ENCODE measurements at regions of chr9 and their contacts with region 1.

Region 1: DNA sequence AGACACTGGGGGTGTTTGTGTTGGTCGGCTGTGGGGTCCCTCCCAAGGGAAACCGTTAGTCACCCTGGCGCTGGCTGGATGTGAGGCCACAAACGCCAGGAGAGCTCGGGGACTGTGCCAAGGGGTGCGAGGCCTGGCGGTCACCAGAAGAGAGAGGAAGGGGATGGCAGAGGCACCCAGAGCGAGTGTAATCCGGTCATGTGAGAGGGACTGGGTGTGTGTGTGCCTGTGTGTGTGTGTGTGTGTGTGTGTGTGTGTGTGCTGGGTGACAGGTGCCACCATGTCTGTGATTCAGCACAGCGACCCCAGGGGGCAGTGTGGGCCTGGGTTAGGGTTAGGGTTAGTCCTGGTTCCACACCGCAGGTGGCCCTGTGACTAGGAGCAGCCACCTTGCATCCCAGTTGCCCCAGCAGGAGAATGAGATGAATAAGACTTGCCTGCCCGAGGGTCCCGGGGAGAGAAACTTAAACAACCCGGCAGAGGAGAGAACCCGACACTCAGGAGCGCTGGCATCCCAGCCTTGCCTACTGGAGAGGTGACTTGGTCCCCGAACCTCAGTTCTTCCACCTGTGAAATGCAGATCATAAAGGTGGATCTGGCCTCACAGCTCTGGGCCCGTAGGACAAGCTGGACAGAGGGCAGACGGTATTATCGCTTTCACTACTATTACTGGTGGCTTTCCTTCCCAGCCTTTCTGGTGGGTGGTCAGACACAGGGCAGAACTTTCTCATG is 1.4 kb upstream of the ADAMTSL2 start:
- DNase-seq: peak; percentile 92

Region 2: GRCh38 chr9:133576875-133577736 is 44.0 kb after region 1 on chr9:
- intact Hi-C with region 1: loop called in 1 of 2 experiments (anchors 1 kb)
- DNase-seq: no peak

Region 3: GRCh38 chr9:133726401-133727276 is 193.5 kb after region 1 on chr9:
- intact Hi-C with region 1: loop called (anchors 2 to 10 kb)
- DNase-seq: peak; percentile 85